Ascending aorta (tissue), 2 donors: ENCODE measurements at regions of chr3 and their contacts with region 1.

Region 1: DNA sequence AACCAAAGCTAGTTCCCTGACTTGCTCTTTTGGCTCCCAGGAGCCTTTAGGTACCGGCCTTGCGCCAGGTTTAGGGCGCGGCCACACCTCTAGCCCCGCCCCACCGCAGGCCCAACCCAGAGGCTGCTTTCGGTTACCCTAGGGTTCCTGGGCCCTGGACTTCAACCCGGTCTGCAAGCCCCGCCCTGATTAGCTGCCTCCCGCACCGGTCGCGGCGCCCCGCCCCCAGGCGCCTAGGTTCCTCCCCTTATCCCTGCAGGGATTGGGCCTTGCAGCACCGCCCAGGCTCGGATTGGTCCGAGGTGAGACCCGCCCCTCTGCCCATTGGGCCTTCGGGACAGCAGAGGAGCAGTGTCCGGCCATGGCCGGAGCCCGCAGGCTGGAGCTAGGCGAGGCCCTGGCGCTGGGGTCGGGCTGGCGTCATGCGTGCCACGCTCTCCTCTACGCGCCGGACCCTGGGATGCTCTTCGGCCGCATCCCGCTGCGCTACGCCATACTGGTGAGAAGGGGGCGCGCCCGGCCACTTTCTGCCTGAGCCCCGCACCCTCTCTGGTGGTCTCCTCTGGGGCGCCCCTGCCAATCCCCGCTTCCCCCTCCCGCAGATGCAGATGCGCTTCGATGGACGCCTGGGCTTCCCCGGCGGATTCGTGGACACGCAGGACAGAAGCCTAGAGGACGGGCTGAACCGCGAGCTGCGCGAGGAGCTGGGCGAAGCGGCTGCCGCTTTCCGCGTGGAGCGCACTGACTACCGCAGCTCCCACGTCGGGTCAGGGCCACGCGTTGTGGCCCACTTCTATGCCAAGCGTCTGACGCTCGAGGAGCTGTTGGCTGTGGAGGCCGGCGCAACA is at the start of gene NUDT16:
- DNase-seq: peak; percentile 99 to 100
- H3K4me3 ChIP-seq: peak within 1 kb of the TSS; percentile 82 to 95
- H3K27ac ChIP-seq: peak within 1 kb of the TSS; percentile 85 to 91
- H3K4me1 ChIP-seq: peaks cover 8 to 24% of the 10 kb centered on the region in 2 donors
- H3K27me3 ChIP-seq: no peaks in the 10 kb centered on the region
- CTCF ChIP-seq: peak in 1 of 3 experiments; percentile 6
- total RNA-seq, gene NUDT16: 41.0 TPM

Region 2: DNA sequence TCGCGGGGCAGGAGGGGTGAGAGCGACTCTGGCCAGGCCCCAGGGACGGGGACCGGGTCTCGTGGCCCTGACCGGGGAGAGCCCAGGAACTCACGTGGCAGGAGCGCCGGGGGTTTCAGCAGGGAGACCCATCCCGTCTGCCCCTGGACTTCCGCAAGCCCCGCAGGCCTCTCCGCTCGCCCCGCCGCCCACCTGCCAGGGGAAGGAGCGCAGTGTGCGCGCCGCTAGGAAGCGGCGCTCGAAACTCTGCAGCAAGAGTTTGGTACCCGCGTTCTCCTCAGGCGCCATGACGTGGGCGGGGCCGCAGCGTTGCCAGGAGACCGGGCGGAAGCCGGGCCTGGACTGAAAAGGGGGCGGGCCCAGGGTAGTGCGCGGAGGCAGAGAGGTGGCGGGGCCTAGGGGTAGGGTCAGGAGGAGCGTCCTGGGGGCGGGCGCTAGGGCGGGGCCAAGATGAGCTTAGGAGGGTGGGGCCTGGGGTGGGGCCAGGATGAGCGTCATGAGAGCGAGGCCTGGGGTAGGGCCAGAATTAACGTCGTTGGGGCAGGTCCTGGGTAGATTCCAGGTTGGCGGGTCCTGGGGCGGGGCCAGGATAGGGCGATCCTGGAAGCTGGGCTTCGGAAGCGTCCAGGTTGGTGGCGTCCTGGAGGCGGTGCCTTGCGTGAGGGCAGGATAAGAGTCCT is 1270.3 kb before region 1 on chr3:
- intact Hi-C with region 1: loop called (anchors 5 kb)
- DNase-seq: peak; percentile 95 to 99
- H3K4me3 ChIP-seq: peak overlapping the region; percentile 82 to 87
- H3K27ac ChIP-seq: peak overlapping the region; percentile 72 to 80
- H3K4me1 ChIP-seq: peaks cover 0 to 2% of the 10 kb centered on the region in 2 donors
- H3K27me3 ChIP-seq: no peaks in the 10 kb centered on the region
- CTCF ChIP-seq: no peak

Region 3: DNA sequence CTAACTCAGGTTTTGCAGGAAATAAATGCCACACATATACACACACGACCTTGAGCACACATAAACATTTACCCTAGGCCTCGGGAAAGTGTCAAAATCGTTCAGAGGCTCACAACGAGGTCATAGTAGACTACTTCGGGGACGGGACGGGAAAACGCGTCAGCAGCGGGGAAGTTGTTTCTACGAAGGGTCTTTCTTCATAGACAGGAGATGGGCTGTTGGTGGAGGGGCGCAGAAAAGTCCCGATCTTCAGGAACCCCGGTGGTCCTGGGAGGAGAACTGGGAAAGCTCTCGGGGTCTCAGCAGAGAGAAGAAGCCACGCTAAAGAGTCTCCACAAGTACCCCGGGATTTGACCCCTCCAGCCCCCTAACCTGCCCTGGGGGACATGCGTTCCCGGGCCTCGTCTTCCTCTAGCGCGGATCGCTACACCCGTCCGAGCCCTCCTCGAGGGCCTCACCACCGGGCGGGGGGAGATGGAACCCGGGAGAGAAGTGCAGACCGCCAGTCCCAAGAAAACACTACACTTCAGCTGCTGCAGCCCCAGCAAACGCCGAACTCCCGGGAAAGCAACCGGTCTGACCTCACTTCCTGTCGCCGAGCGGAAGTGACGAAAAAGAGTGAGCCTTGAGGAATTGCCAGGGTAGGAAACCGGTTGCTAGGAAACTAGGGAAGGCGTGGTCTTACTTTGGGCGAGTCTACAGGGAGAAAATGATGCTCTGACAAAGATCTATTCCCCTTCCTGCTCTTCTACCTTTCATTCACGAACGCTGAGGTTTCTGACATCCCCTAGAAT is 635.2 kb before region 1 on chr3 and contains the start of gene PIK3R4:
- intact Hi-C with region 1: loop called (anchors 1 kb)
- DNase-seq: peak; percentile 93 to 98
- H3K4me3 ChIP-seq: peak within 1 kb of the TSS; percentile 83 to 95
- H3K27ac ChIP-seq: peak within 1 kb of the TSS; percentile 86 to 90
- H3K4me1 ChIP-seq: peaks cover 2 to 23% of the 10 kb centered on the region in 2 donors
- H3K27me3 ChIP-seq: no peaks in the 10 kb centered on the region
- CTCF ChIP-seq: no peak
- total RNA-seq, gene PIK3R4: 101 TPM

Region 4: DNA sequence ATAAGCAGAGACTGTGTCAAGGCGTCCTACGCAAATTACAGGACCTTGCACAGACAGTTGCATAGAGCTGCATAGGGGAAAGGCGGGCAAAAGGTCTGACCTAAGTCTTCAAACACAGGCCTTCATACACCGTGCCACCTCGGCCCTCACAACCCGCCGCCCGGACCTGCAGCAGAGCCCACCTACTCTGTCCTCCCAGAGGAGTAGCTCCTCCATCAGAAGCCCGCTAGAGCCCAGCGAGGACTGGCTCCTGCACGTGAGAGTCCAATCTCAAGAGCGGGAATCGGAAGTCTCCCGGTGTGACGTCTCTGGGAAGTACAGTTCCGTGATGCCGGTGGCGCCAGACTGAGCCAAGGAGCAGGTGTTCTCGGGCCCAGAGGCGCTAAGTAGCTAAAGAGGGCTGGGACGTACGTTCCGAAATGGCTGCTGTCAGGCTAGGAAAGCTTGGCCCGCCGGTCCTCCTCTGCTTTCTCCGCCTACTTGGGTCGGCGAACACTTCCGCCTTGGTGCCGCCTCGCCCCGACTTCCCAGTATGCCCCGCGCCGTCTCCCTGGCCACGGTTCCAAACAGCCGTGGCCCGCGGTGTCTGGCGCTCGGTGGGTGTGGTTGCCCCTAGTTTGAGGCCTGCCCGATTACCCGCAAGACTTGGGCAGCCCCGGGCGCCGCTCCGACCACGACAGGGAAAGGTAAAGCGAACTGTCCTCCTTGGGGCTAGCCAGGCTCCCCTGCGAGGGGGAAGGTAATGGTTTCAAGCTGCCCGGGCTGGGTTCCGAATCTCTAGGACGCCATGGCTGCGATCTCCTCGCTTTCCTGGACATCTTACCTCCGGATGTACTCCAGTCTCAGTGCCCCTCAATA is 355.1 kb before region 1 on chr3 and contains the starts of genes ASTE1 and NEK11:
- intact Hi-C with region 1: loop called (anchors 5 kb)
- DNase-seq: peak; percentile 69 to 94
- H3K4me3 ChIP-seq: peak within 1 kb of the TSS; percentile 72 to 83
- H3K27ac ChIP-seq: peak within 1 kb of the TSS; percentile 77 to 86
- H3K4me1 ChIP-seq: peaks cover 0 to 18% of the 10 kb centered on the region in 2 donors
- H3K27me3 ChIP-seq: no peaks in the 10 kb centered on the region
- CTCF ChIP-seq: no peak
- total RNA-seq, gene ASTE1: 14.0 TPM
- total RNA-seq, gene NEK11: 4.0 TPM

Region 5: GRCh38 chr3:131361464-131362421 is 19.9 kb before region 1 on chr3:
- intact Hi-C with region 1: loop called (anchors 2 kb)
- DNase-seq: peak in 1 of 2 donors; percentile 90
- H3K4me3 ChIP-seq: peak overlapping the region; percentile 55 to 70
- H3K27ac ChIP-seq: peak overlapping the region; percentile 37 to 71
- H3K4me1 ChIP-seq: peaks cover 0 to 15% of the 10 kb centered on the region in 2 donors
- H3K27me3 ChIP-seq: no peaks in the 10 kb centered on the region
- CTCF ChIP-seq: no peak

Region 6: DNA sequence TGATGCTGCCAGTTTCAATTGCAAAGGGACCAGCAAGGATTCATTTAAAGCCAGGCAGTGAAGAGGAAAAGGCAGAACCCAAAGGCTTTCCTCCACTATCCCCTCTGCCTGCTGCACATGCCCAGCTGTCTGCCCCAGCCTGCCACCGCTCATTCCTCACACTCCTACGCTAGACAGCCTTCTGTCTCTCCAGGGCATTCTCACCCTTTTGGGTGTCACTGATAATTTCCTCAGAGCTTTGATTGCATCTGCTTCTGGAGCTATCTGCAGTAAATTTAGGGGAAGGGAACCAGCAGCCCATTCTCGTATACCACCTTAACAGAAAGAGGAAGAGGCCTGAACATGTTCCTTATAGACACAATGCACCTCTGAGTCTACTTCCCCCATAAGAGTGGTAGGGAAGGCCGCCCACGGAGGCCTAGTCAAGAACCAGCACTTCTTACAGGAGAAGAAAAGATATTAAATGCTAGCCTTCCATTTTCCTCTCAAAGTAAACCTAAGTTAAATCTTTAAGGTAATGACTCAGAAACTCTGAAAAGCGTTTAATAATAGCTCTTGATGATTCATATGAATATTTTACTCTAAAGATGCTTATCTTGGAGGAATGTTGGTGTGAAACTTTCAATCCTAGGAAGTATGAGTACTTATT is 20.8 kb after region 1 on chr3:
- intact Hi-C with region 1: loop called (anchors 1 kb)
- DNase-seq: no peak
- H3K4me3 ChIP-seq: no peak overlapping the region
- H3K27ac ChIP-seq: peak overlapping the region; percentile 37 to 75
- H3K4me1 ChIP-seq: peaks cover 0 to 14% of the 10 kb centered on the region in 2 donors
- H3K27me3 ChIP-seq: no peaks in the 10 kb centered on the region
- CTCF ChIP-seq: no peak

Region 7: DNA sequence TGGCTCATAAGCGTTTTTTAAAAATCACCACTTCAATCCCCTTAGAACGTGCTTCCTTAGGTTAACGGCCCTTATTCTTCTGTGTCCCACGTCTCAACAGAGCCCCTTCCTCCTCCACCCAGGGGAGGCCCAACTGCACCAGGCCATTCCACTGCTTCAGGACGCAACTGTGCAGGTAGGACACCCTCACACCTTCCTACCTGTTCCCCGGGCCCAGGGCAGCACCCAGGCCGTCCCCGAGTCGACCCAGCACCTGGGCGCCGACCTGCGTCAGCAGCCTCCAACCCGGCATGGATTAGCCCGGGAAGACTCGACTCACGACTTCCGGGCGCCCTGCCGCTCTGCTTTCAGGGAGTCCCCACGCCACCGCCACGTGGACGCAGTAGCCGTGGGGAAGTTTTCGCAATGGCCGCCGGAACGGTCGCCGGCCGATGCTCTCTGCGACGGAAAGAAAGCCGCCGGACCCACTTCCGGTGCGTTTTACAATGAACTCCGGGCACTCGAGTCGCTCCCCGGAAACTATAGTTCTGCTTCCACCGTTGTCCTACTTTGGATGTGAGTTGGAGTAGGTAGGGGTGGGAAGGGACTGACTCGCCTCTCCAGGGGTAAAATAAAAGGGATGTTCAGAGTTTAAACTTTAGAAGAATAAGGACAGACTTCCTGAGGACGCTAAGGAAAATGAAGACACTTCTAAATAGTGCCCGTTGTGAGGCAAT is 121.0 kb after region 1 on chr3 and contains the start of gene MRPL3:
- intact Hi-C with region 1: loop called (anchors 5 kb)
- DNase-seq: peak; percentile 57 to 90
- H3K4me3 ChIP-seq: peak within 1 kb of the TSS; percentile 82 to 96
- H3K27ac ChIP-seq: peak within 1 kb of the TSS; percentile 68
- H3K4me1 ChIP-seq: peaks cover 4 to 12% of the 10 kb centered on the region in 2 donors
- H3K27me3 ChIP-seq: no peaks in the 10 kb centered on the region
- CTCF ChIP-seq: no peak
- total RNA-seq, gene MRPL3: 45.7 TPM